Activated CD4-positive, alpha-beta memory T cell treated with anti-CD3 and anti-CD28 coated beads, Interleukin-2, amount 10 ng/mL, durations not matched to agents 7 days and 5 days (primary cell): ENCODE measurements at regions of chr2 and their contacts with region 1.

Region 1: DNA sequence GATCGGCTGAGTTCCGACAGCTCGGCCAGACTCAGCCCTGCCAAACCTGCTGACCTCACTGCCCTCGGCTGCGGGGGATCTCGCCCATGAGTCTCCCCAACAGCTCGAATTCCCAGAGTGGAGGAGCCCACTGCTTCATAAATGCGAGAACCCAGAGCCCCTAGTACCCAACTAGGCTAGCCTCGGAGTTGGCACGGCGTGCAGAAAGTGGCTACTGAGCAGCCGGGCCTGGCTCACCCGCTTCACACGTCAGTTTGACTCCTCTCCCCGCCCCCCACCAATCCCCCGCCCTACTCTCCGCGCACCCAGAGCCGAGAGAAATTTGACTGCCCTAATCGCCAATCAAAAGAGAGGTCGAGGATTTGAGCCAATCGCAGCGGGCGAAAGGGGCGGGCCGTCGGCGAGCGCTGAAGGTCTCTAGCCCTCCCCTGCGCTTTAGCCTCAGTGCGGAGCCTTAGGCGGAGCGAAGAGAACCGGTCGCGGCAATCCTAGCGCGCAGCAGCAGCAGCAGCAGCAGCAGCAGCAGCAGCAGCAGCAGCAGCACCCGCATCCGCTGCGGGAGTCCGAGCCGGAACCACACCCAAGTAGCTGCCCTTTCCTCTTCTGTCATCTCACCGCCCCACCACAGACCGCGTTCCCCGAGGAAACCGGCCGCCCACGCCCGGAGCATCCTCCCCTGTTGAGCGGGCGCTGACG is at the start of gene GLS:
- DNase-seq: peak; percentile 98
- H3K4me3 Mint-ChIP-seq: peak within 1 kb of the TSS; percentile 94
- H3K27ac Mint-ChIP-seq: peak within 1 kb of the TSS; percentile 100
- H3K4me1 Mint-ChIP-seq: peaks cover 48% of the 10 kb centered on the region
- H3K27me3 Mint-ChIP-seq: no peaks in the 10 kb centered on the region
- total RNA-seq, gene GLS: 146 to 150 TPM

Region 2: GRCh38 chr2:190534310-190535120 is 346.0 kb before region 1 on chr2 and contains the start of gene NEMP2:
- CTCF ChIA-PET with region 1: no interaction called
- POLR2A ChIA-PET with region 1: interaction called, 30 read pairs
- DNase-seq: peak; percentile 83
- H3K4me3 Mint-ChIP-seq: peak within 1 kb of the TSS; percentile 89
- H3K27ac Mint-ChIP-seq: peak within 1 kb of the TSS; percentile 99
- H3K4me1 Mint-ChIP-seq: peaks cover 55% of the 10 kb centered on the region
- H3K27me3 Mint-ChIP-seq: no peaks in the 10 kb centered on the region
- total RNA-seq, gene NEMP2: 18.9 to 19.1 TPM

Region 3: DNA sequence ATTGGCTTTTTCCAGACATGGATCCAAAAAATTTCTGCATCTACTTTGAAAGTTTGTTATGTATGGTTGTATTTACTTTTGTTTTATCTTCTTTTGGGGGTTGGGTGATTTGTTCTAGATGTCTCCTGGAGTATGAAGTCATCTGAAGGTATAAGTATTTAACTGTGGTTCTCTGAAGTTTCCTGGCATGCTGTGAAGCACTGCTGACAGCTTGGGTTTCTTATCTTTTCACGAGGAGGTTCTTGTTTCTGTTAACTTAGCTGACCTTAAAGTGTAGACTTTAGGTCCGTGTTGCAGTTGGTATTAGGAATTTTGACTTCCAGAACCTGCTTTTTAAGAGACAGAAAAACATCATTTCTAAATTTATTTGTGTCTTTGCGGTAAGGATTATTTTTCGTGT is 16.0 kb after region 1 on chr2:
- CTCF ChIA-PET with region 1: interaction called, 5 read pairs
- POLR2A ChIA-PET with region 1: interaction called, 85 read pairs
- DNase-seq: no peak
- H3K4me3 Mint-ChIP-seq: no peak overlapping the region
- H3K27ac Mint-ChIP-seq: no peak overlapping the region
- H3K4me1 Mint-ChIP-seq: peaks cover 27% of the 10 kb centered on the region
- H3K27me3 Mint-ChIP-seq: no peaks in the 10 kb centered on the region

Region 4: GRCh38 chr2:191013932-191014652 is 133.6 kb after region 1 on chr2 and contains the start of gene STAT1:
- CTCF ChIA-PET with region 1: interaction called, 5 read pairs
- POLR2A ChIA-PET with region 1: interaction called, 69 read pairs
- DNase-seq: peak; percentile 96
- H3K4me3 Mint-ChIP-seq: no peak within 1 kb of the TSS
- H3K27ac Mint-ChIP-seq: no peak within 1 kb of the TSS
- H3K4me1 Mint-ChIP-seq: peaks cover 44% of the 10 kb centered on the region
- H3K27me3 Mint-ChIP-seq: no peaks in the 10 kb centered on the region
- total RNA-seq, gene STAT1: 540 to 547 TPM

Region 5: DNA sequence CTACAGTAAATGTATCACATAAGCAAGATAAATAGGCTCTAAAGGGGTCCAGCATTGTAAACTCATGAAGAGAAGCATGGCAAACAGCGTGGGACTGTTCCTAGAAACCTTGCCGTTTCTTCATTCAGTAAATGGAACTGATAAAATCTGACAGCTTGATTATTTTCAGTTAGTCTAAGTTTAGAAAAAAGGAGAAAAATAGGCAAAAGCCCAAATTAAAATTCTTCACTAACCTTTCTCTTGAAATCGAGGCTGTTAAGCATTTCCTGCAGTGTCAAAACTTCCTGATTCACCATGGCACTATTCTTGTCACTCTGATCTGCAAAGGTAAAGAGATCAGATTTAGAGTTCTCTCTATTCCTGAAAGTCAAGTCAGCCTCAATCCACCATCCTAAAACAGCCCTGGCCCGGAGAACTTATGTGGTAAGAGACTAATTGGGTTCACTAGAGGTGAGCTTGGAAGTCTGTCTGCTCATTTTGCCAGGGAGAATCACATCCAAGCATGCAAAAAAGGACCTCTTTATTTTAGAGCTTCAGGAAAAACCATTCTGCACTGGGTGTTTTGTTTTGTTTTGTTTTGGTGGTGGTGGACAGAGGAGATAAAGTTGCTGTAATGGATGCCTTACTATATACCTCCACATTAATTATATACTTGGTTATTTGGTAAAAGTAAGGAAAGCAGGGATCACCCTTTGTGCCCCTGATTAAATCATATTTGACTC is 185.8 kb after region 1 on chr2:
- CTCF ChIA-PET with region 1: interaction called, 3 read pairs
- POLR2A ChIA-PET with region 1: interaction called, 28 read pairs
- DNase-seq: peak; percentile 23
- H3K4me3 Mint-ChIP-seq: peak overlapping the region; percentile 80
- H3K27ac Mint-ChIP-seq: peak overlapping the region; percentile 84
- H3K4me1 Mint-ChIP-seq: peaks cover 78% of the 10 kb centered on the region
- H3K27me3 Mint-ChIP-seq: no peaks in the 10 kb centered on the region

Region 6: DNA sequence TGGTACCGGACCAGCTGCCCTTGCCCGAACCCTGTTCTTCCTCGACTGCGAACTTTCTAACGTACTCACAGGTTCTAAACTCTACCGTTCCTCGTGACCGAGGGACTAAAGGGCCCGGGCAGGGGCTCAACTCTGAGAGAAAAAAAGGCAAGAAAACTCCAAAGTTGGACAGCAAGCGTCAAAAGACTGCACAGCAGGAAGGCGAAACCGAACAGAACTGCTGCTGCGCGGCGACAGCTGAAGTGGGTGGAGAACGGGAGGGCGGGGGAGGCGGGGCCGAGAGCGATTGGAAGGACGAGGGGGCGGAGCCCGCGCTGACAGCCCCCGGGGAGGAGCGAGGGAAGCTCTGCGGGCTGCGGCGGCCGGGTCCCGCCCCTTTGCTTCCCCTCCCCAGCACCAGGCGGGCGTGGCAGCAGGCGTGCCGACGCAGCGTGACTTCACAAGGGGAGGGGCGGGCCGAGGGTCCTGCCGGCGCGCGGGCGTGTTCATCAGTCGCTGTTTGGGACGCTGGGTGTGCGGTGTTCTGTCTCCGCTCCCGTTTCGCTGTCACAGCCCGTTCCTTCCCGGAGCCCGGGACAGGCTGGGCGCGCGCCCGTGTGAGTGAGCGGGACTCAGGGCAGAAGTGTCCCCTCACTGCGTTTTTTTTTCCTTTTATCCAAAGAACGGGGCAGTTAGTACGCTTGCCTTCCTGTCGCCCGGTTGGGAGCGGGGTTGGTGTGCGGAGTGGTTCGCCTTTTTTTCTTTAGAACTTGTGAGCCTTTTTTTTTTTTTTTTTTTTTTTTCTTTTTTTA is 797.3 kb after region 1 on chr2 and contains the start of gene NABP1:
- CTCF ChIA-PET with region 1: no interaction called
- POLR2A ChIA-PET with region 1: interaction called, 30 read pairs
- DNase-seq: peak; percentile 99
- H3K4me3 Mint-ChIP-seq: peak within 1 kb of the TSS; percentile 88
- H3K27ac Mint-ChIP-seq: peak within 1 kb of the TSS; percentile 98
- H3K4me1 Mint-ChIP-seq: peaks cover 50% of the 10 kb centered on the region
- H3K27me3 Mint-ChIP-seq: no peaks in the 10 kb centered on the region
- total RNA-seq, gene NABP1: 73.5 to 73.7 TPM